PC-3 (cell line): ENCODE measurements at regions of chr3 and their contacts with region 1.

Region 1: GRCh38 chr3:112814266-112814665 is 32.4 kb downstream of the CD200R1L start:
- DNase-seq: peak; percentile 77
- ATAC-seq: peak; percentile 78
- H3K4me3 ChIP-seq: no peak overlapping the region
- H3K27ac ChIP-seq: no peak overlapping the region
- H3K4me1 ChIP-seq: peaks cover 19% of the 10 kb centered on the region
- H3K27me3 ChIP-seq: no peaks in the 10 kb centered on the region
- CTCF ChIP-seq: peak; percentile 81

Region 2: DNA sequence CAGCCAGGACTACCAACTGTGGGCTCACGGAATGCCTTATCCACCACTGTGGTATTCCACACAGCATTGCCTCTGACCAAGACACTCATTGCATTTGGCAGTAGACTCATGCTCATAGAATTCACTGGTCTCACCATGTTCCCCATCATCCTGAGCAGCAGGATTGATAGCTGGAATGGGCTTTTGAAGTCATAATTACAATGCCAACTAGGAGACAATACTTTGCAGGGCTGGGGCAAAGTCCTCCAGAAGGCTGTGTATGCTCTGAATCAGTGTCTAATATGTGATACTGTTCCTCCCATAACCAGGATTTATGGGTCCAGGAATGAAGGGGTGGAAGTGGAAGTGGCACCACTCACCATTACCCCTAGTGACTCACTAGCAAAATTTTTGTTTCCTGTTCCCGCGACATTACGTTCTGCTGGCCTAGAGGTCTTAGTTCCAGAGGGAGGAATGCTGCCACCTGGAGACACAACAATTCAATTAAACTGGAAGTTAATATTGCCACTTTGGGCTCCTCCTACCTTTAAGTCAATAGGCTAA is 114.8 kb before region 1 on chr3:
- CTCF ChIA-PET with region 1: no interaction called
- POLR2A ChIA-PET with region 1: no interaction called
- intact Hi-C with region 1: loop called (anchors 1 kb)
- DNase-seq: peak; percentile 94
- ATAC-seq: peak; percentile 86
- H3K4me3 ChIP-seq: no peak overlapping the region
- H3K27ac ChIP-seq: peak overlapping the region; percentile 41
- H3K4me1 ChIP-seq: peaks cover 10% of the 10 kb centered on the region
- H3K27me3 ChIP-seq: no peaks in the 10 kb centered on the region
- CTCF ChIP-seq: peak; percentile 58

Region 3: DNA sequence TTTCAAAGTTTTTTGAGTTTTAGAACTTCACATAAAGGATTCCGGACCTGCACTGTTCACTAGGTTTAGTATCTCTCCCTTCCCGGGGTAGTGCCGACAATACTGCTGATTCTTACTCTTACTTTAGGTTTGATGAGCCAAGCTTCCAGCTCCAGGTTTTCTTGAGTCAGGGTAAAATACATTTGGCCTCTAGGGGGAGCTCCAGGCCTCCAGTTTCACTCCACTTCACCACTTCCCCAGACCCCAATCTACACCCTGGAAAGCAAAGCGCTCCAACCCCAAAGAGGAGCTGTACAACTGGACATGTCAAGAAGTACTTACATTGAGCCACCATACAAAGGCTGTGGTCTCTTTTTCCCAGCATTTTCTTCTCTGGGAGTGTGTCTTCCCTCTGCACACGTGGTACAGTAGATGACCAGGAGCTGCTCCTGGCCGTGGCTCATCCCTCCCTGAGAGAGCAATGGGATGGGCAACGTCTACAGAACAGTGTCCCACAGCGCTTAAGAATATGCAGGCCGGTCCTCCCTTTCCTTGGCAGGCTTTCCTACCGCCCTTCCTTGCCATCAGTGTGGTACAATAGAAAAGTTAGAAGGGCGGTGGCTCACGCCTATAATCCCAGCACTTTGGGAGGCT is 79.4 kb before region 1 on chr3:
- CTCF ChIA-PET with region 1: interaction called, 69 read pairs
- POLR2A ChIA-PET with region 1: interaction called, 3 read pairs
- intact Hi-C with region 1: loop called (anchors 1 kb)
- DNase-seq: peak; percentile 89
- ATAC-seq: peak; percentile 71
- H3K4me3 ChIP-seq: no peak overlapping the region
- H3K27ac ChIP-seq: no peak overlapping the region
- H3K4me1 ChIP-seq: peaks cover 33% of the 10 kb centered on the region
- H3K27me3 ChIP-seq: no peaks in the 10 kb centered on the region
- CTCF ChIP-seq: peak; percentile 92

Region 4: GRCh38 chr3:112979240-112979832 is 165.1 kb after region 1 on chr3:
- CTCF ChIA-PET with region 1: interaction called, 8 read pairs
- POLR2A ChIA-PET with region 1: no interaction called
- intact Hi-C with region 1: loop called (anchors 2 kb)
- DNase-seq: peak; percentile 62
- ATAC-seq: no peak; the same call in 1 of the 2 replicates
- H3K4me3 ChIP-seq: no peak overlapping the region
- H3K27ac ChIP-seq: no peak overlapping the region
- H3K4me1 ChIP-seq: peaks cover 2% of the 10 kb centered on the region
- H3K27me3 ChIP-seq: no peaks in the 10 kb centered on the region
- CTCF ChIP-seq: peak; percentile 87